PC-9 (cell line): ENCODE measurements at regions of chr4 and their contacts with region 1.

Region 1: DNA sequence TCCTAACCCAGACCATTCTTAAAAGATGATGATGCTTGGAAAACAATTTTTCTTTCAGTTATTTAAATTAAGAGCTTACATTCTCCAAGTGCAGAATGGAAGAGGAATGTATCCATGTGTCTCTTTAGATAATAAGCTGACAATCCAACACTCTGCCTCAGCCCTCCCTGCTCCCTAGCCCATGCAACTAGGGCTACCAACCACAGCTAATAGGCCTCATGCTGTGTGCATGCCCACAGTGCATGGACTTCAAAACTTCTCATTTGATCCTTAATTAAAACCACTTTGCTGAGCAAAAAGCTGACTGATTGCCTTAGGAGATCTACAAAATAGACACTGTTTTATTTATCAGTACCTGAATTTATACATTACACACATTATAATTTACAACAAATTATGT is 473.9 kb downstream of the GALNTL6 start:
- DNase-seq: no peak
- H3K4me3 ChIP-seq: no peak overlapping the region
- H3K27ac ChIP-seq: no peak overlapping the region
- H3K4me1 ChIP-seq: no peaks in the 10 kb centered on the region
- H3K27me3 ChIP-seq: no peaks in the 10 kb centered on the region
- CTCF ChIP-seq: no peak

Region 2: GRCh38 chr4:171940656-171941055 is 346.5 kb before region 1 on chr4:
- CTCF ChIA-PET with region 1: no interaction called
- POLR2A ChIA-PET with region 1: no interaction called
- intact Hi-C with region 1: no loop called
- DNase-seq: no peak
- H3K4me3 ChIP-seq: no peak overlapping the region
- H3K27ac ChIP-seq: no peak overlapping the region
- H3K4me1 ChIP-seq: no peaks in the 10 kb centered on the region
- H3K27me3 ChIP-seq: no peaks in the 10 kb centered on the region
- CTCF ChIP-seq: no peak

Region 3: DNA sequence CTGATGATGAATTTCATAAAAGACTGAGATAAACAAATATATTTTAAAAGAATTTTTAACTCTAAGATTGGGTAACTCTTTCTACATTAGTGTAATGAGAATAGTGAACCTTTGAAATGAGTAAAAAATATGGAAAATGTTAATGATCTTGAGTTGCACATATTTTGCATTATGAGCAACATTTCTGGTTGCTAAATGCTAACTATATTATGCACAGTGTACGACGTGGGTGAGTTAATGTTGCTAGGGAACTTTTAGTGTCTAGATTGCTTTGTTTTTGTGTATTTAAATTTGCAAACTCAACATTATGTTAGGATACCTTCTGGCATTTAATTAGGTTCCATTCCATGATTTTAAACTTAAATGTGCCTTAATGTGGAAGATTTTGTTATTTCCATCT is 268.6 kb after region 1 on chr4:
- CTCF ChIA-PET with region 1: no interaction called
- POLR2A ChIA-PET with region 1: interaction called, 12 read pairs
- intact Hi-C with region 1: no loop called
- DNase-seq: no peak
- H3K4me3 ChIP-seq: no peak overlapping the region
- H3K27ac ChIP-seq: no peak overlapping the region
- H3K4me1 ChIP-seq: no peaks in the 10 kb centered on the region
- H3K27me3 ChIP-seq: no peaks in the 10 kb centered on the region
- CTCF ChIP-seq: no peak